ENCODE measurements at regions of chr12 and their contacts with region 1.

Region 1: DNA sequence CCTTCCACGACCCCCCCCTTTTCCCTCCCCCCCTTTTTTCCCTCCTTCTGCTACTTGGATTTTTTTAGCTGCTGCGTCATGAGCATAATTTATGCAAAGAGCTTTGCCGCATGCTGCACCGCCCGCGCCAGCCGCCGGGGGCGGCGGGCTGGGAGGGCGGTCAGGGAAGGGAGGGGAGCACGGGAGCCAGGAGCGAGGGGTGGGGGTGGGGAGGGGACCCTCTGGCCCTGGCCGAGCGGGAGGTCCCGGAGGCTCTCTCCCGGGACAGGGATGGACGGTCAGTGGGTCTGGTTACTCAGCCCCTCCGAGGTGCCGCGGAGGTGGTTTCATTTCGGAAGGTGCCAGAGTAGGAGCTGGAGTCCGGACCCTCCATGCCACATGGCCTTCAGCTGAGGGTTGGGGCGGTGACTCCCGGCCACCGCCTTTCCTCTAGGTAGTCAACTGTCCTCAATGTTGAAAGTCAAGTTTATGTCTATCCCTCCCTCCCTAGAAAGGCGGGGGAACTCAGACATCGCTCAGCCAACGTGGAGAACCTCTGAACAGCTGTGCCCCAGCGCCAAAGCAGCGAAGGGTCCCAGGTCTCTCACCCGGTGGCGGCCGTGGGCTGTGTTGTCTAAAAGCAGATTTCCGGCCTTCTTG is at the start of gene POU6F1:
- DNase-seq: peak; percentile 72
- H3K4me3 Mint-ChIP-seq: peak within 1 kb of the TSS; percentile 75
- H3K27ac Mint-ChIP-seq: peak within 1 kb of the TSS; percentile 84
- H3K4me1 Mint-ChIP-seq: peaks cover 15% of the 10 kb centered on the region
- H3K27me3 Mint-ChIP-seq: no peaks in the 10 kb centered on the region
- total RNA-seq, gene POU6F1: 7.8 TPM

Region 2: DNA sequence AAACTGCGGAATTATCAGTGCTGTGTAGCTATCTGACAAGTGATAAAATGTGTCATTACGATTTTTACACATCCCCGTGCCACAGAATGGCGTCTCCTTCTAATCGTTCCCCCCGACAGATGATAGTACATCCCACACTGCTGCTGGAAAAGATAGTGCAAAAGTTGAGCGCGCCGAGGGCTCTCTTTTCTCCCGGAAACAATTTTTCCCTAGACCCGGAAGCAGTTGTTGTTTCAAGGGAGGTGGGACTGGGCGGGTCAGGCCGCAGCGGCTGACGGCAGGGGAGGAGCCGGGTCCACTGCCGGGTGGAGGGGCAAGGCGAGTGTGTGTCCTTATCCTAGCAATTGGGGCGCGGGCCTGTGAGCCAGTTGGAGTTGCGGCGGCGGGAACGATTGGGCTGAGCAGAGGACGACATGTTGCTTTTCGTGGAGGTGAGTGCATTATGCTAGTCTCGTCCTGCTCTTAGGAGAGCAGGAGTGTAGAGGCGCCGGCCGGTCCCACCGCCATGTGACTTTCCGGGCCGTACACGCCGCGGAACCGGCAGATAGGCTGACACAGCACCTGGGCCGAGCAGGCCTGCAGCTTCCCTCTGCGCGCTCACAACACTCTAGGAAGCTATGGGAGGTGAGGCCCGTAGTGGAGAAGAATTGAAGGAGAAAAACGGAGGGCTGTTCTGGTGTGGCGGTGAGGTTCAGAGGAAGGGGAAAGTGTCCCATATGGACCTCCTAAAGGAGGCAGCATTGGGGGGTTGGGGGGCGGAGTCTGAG is 817.3 kb before region 1 on chr12 and contains the start of gene LARP4:
- CTCF ChIA-PET with region 1: no interaction called
- intact Hi-C with region 1: loop called (anchors 1 kb)
- DNase-seq: peak; percentile 94
- H3K4me3 Mint-ChIP-seq: peak within 1 kb of the TSS; percentile 99
- H3K27ac Mint-ChIP-seq: peak within 1 kb of the TSS; percentile 87
- H3K4me1 Mint-ChIP-seq: peaks cover 19% of the 10 kb centered on the region
- H3K27me3 Mint-ChIP-seq: peaks cover 2% of the 10 kb centered on the region
- total RNA-seq, gene LARP4: 44.7 to 44.9 TPM

Region 3: GRCh38 chr12:51083126-51083833 is 134.8 kb before region 1 on chr12 and contains the start of gene CSRNP2:
- CTCF ChIA-PET with region 1: interaction called, 3 read pairs
- intact Hi-C with region 1: loop called (anchors 2 kb)
- DNase-seq: peak; percentile 96
- H3K4me3 Mint-ChIP-seq: peak within 1 kb of the TSS; percentile 94
- H3K27ac Mint-ChIP-seq: peak within 1 kb of the TSS; percentile 70
- H3K4me1 Mint-ChIP-seq: peaks cover 35% of the 10 kb centered on the region
- H3K27me3 Mint-ChIP-seq: no peaks in the 10 kb centered on the region
- total RNA-seq, gene CSRNP2: 8.4 to 11.0 TPM

Region 4: DNA sequence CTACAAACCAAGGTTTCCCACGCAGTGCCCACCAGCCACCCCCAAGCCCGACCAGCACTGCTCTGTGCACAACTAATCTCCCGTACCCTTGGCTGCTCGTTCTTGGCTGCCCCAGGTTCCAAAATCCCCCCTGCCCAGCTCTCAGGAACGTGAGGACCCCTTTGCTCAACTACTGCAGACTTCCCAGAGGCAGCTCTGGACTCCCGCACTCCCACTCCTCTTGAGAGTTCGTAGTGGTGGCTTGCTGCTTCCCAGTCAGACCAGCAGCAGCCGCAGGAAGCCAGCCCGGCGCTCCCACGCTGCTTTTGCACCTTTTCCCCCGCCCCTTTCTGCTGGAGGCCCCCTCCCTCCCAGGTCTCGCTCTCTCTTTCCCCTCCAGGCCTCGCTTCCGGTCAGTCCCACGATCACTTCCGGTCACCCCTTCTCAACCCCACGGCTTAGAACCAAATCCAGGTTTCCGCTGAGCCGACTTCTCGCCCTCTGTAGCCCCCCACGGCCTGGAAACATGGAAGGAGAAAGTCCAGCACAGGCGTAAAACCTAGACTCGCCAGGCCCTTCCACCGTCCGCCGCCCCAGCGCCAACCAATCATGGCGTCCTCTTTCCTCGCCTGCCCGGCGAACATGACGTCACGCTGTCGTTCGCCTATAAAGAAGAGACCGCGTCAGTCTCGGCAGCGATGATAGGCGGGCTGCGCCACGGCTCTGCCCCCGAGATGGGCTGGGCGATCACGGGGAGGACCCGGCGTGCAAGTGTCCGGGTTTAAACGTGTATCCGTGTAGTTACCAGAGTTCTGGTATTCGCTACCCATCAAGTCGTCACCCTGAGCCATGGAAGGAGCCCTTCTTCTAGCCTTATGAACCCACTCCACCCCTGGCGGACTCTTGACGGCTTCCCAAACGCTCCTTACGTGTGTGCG is 45.3 kb before region 1 on chr12 and contains the start of gene TFCP2:
- CTCF ChIA-PET with region 1: interaction called, 3 read pairs
- intact Hi-C with region 1: loop called (anchors 1 kb)
- DNase-seq: peak; percentile 96
- H3K4me3 Mint-ChIP-seq: peak within 1 kb of the TSS; percentile 66
- H3K27ac Mint-ChIP-seq: peak within 1 kb of the TSS; percentile 66
- H3K4me1 Mint-ChIP-seq: peaks cover 14% of the 10 kb centered on the region
- H3K27me3 Mint-ChIP-seq: no peaks in the 10 kb centered on the region
- total RNA-seq, gene TFCP2: 23.6 to 25.4 TPM

Region 5: GRCh38 chr12:51238510-51239334 is 20.6 kb after region 1 on chr12 and contains the start of gene DAZAP2:
- CTCF ChIA-PET with region 1: no interaction called
- intact Hi-C with region 1: loop called (anchors 1 kb)
- DNase-seq: peak; percentile 96
- H3K4me3 Mint-ChIP-seq: peak within 1 kb of the TSS; percentile 96
- H3K27ac Mint-ChIP-seq: peak within 1 kb of the TSS; percentile 99
- H3K4me1 Mint-ChIP-seq: peaks cover 37% of the 10 kb centered on the region
- H3K27me3 Mint-ChIP-seq: no peaks in the 10 kb centered on the region
- total RNA-seq, gene DAZAP2: 106 to 107 TPM